Naive thymus-derived CD8-positive, alpha-beta T cell (primary cell): ENCODE measurements at regions of chr4 and their contacts with region 1.

Region 1: DNA sequence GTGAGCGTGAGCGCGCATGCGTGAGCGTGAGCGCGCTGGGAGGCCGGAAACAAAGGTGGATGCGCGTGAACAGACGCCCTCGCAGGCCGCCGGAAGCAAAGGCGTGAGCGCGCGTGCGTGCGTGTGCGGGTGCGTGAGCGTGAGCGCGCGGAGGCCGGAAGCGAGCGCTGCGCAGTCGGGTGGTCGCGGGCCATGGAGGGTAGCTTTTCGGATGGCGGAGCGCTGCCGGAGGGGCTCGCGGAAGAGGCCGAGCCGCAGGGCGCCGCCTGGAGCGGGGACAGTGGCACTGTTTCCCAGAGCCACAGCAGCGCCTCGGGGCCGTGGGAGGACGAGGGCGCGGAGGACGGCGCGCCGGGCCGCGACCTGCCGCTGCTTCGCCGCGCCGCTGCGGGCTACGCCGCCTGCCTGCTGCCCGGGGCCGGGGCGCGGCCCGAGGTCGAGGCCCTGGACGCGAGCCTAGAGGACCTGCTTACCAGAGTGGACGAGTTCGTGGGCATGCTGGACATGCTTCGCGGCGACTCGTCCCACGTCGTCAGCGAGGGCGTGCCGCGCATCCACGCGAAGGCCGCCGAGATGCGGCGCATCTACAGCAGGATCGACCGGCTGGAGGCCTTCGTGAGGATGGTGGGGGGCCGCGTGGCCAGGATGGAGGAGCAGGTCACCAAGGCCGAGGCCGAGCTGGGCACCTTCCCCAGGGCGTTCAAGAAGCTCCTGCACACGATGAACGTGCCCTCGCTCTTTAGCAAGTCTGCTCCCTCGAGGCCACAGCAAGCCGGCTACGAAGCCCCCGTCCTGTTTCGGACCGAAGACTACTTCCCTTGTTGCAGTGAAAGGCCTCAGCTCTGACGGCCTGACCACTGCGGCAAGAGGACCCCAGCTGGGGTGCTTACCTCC is at the start of gene BLOC1S4:
- DNase-seq: peak; percentile 85 to 95 (median 90)
- ATAC-seq: peak; percentile 86 to 89
- H3K4me3 Mint-ChIP-seq: peak within 1 kb of the TSS; percentile 84 to 98 (median 94)
- H3K27ac Mint-ChIP-seq: peak within 1 kb of the TSS; percentile 92 to 99 (median 97)
- H3K4me1 Mint-ChIP-seq: peaks cover 15 to 45% (median 35%) of the 10 kb centered on the region in 4 donors
- H3K27me3 Mint-ChIP-seq: peaks cover 0 to 2% (median 0%) of the 10 kb centered on the region in 5 donors
- polyA plus RNA-seq, gene BLOC1S4: 65.8 to 81.6 (median 75.4) TPM

Region 2: GRCh38 chr4:6640292-6641163 is 75.7 kb before region 1 on chr4 and contains the start of gene MRFAP1:
- POLR2A ChIA-PET with region 1: interaction called, 96 read pairs
- DNase-seq: peak; percentile 91 to 97 (median 94)
- ATAC-seq: peak; percentile 84 to 89
- H3K4me3 Mint-ChIP-seq: peak within 1 kb of the TSS; percentile 97 to 100 (median 99)
- H3K27ac Mint-ChIP-seq: peak within 1 kb of the TSS; percentile 98 to 100 (median 99)
- H3K4me1 Mint-ChIP-seq: peaks cover 25 to 45% (median 41%) of the 10 kb centered on the region in 4 donors
- H3K27me3 Mint-ChIP-seq: no peaks in the 10 kb centered on the region
- polyA plus RNA-seq, gene MRFAP1: 141 to 186 (median 155) TPM

Region 3: GRCh38 chr4:6663596-6664393 is 52.5 kb before region 1 on chr4:
- POLR2A ChIA-PET with region 1: interaction called, 14 read pairs
- DNase-seq: no peak
- ATAC-seq: peak; percentile 36 to 43
- H3K4me3 Mint-ChIP-seq: peak overlapping the region in 8 of 10 donors; percentile 12 to 57 (median 50)
- H3K27ac Mint-ChIP-seq: peak overlapping the region in 1 of 10 donors; percentile 36
- H3K4me1 Mint-ChIP-seq: peaks cover 1 to 13% (median 9%) of the 10 kb centered on the region in 4 donors
- H3K27me3 Mint-ChIP-seq: peaks cover 0 to 35% (median 5%) of the 10 kb centered on the region in 5 donors

Region 4: DNA sequence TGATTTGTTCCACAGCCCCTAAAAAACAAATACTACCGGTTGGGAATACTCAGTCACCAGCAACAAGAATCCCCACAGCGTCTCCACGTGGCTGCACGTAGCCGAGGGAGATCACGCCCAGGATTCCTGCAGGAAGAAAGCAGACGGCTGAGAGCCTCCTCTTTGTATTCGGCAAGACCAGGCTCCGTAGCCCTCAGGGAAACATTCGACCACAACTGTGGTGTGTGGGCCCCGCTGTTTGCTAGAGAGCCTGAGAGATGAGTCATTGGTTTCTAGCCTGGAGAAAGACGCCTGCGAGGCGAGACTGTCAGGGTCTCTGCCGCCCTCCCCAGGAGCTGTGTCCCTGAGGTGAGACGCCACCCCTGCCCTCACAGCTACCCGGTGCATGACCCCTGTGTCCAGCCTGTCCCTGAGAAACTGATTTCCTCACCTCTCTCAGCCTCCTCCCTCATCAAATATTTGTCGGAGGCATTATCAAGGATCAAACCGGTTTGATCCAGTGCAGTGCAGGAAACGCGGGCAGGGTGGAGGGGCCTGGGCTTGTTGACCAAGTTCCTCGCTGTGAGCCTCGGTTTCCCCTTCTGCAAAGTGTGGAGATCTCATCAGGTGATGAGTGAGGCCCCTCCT is 27.3 kb before region 1 on chr4:
- POLR2A ChIA-PET with region 1: interaction called, 81 read pairs
- DNase-seq: peak; percentile 39 to 86 (median 60)
- ATAC-seq: peak; percentile 76 to 90
- H3K4me3 Mint-ChIP-seq: peak overlapping the region; percentile 73 to 95 (median 84)
- H3K27ac Mint-ChIP-seq: peak overlapping the region; percentile 88 to 99 (median 97)
- H3K4me1 Mint-ChIP-seq: peaks cover 39 to 78% (median 70%) of the 10 kb centered on the region in 4 donors
- H3K27me3 Mint-ChIP-seq: no peaks in the 10 kb centered on the region

Region 5: GRCh38 chr4:6701371-6701770 is 14.9 kb before region 1 on chr4:
- POLR2A ChIA-PET with region 1: interaction called, 42 read pairs
- DNase-seq: peak in 3 of 10 donors; percentile 18 to 38 (median 37)
- ATAC-seq: no peak
- H3K4me3 Mint-ChIP-seq: no peak overlapping the region
- H3K27ac Mint-ChIP-seq: peak overlapping the region in 5 of 10 donors; percentile 4 to 68 (median 13)
- H3K4me1 Mint-ChIP-seq: peaks cover 42 to 74% (median 67%) of the 10 kb centered on the region in 4 donors
- H3K27me3 Mint-ChIP-seq: no peaks in the 10 kb centered on the region

Region 6: DNA sequence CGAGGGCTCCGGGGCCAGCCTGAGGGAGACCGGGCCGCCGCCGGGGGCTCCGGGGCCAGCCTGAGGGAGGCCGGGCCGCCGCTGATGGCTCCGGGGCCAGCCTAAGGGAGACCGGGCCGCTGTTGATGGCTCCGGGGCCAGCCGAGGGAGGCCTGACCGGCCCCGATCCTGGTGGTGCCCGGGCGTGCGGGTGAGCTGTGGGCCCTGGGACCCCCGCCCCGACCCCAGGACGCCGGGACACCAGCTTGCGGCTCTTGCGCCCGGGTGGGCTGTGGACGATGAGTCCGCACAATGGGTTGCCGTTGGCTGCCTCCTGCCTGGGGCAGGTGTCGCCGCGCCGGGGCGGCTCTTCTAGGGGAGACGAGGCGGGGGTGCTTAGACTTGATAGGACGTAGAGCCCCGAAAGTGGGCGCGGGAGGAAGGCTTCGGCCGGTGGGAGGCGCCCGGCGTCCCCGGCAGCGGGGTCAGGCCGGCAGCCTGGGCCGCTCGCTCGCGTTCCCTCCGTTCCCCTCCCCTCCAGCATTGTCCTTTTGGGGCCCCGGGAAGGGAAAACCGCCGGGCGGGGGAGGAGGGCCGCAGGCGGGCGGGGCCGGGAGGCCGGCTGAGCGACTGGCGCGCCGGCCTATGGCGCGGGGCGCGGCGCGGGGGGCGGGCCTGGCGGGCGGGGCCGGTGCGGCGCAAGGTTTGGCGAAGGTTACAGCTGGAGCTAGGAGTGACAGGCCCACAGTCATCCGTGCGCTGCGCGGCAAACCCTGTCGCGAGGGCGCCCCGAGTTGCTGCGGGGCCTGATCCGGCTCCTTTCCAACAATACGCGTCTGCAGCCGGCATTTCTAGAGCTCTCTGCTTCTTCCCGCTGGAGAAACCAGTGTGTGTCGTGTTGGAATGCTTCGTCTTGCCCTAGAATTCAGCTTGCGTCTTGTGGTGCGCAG is 67.1 kb after region 1 on chr4:
- POLR2A ChIA-PET with region 1: interaction called, 31 read pairs
- DNase-seq: peak; percentile 78 to 91 (median 88)
- ATAC-seq: peak; percentile 69 to 73
- H3K4me3 Mint-ChIP-seq: peak overlapping the region; percentile 82 to 92 (median 88)
- H3K27ac Mint-ChIP-seq: peak overlapping the region; percentile 68 to 96 (median 91)
- H3K4me1 Mint-ChIP-seq: peaks cover 41 to 74% (median 72%) of the 10 kb centered on the region in 4 donors
- H3K27me3 Mint-ChIP-seq: no peaks in the 10 kb centered on the region

Region 7: DNA sequence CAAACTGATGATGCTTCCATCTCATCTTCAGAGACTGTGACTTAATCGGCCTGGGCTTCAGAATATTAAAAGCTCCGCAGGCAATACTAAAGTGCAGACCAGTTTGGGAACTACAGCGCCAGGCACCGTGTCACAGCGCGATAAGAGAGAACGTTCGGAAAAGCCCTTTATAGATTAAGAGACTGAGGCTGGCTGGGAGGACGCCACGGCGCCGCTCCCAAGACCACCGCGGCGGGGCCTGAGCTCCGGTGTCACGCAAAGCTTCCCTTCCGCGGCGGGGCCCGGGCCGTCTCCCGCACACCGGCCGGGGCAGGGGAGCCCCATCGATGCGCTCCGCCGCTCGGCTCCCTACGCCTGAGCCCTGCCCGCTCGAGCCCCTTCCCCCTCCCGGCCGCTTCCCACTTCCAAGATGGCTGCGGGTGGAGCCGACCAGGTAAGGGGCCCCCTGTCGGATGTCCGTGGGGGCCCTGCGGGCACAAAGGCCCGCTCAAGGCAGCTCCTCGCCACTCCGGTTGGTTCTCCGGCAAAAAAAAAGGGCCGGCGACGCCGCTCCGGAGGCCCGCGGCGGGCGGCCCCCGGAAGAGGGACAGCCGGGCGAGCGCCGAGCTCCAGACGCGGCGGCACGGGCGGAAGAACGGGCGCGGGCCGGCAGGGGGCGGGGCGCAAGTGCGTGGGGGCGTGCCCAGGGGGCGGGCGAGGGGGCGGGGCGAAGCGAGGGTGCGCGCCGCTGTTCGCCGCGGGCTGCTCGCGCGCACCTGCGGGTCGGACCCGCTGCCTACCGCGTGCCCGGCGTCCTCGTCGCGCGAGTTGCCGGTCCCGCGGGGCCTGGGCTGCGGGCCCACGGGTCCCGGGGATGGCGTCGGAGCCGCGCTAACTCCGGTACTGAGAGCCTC is 193.1 kb after region 1 on chr4 and contains the start of gene TBC1D14:
- POLR2A ChIA-PET with region 1: interaction called, 11 read pairs
- DNase-seq: peak; percentile 76 to 93 (median 88)
- ATAC-seq: peak; percentile 85 to 87
- H3K4me3 Mint-ChIP-seq: peak within 1 kb of the TSS; percentile 86 to 95 (median 94)
- H3K27ac Mint-ChIP-seq: peak within 1 kb of the TSS; percentile 87 to 95 (median 93)
- H3K4me1 Mint-ChIP-seq: peaks cover 26 to 57% (median 52%) of the 10 kb centered on the region in 4 donors
- H3K27me3 Mint-ChIP-seq: no peaks in the 10 kb centered on the region
- polyA plus RNA-seq, gene TBC1D14: 34.8 to 47.0 (median 36.7) TPM